H1 (cell line): ENCODE measurements at regions of chr7 and their contacts with region 1.

Region 1: GRCh38 chr7:131546583-131547111 is 9.8 kb downstream of the PODXL start:
- DNase-seq: peak; percentile 89 to 92
- H3K4me3 ChIP-seq: no peak overlapping the region
- H3K27ac ChIP-seq: no peak overlapping the region
- H3K4me1 ChIP-seq: peaks cover 39 to 86% (median 55%) of the 10 kb centered on the region in 4 experiments
- H3K27me3 ChIP-seq: no peaks in the 10 kb centered on the region
- CTCF ChIP-seq: peak; percentile 98 to 99 (median 98)
- EP300 ChIP-seq: no peak
- POLR2A ChIP-seq: no peak; a peak in 1 of 3 replicates
- RAD21 ChIP-seq: peak; percentile 73 to 79

Region 2: DNA sequence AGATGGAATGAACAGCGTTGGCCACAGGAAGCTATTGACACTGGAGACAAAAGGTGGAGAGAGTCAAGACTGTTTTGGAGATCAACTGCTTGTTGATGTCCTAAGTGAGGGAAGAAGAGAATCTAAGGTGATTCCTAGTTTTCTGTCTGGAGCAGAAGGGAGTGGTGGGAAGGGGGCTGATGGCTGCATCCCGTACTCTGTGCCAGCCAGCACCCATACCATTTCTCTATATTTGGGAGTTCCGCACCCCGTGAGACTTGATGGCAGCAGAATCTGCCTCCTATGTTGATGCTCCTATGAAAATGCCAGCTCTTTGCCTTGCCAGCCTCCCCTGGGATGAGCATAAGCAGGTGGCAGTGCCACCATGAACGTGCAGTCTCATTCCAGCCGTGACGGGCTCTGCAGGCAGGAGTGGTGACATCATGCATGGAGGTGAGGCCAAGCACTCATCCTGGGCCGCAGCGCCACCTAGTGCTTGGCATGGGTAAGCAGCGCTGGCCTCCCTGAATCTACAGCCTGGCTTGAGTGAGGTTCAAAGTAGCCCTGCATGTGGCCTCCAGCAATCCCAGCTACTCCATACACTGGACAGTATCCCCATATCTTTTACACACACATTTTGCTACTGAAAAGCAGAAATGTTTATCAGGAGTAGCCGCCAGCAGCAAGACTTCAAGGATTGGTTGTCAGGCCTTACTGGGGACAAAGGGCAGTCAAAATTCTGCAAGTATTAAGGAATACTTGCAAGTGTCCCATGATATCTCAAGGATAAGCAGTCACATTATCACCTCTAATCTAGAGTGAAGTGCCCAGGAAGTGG is 33.2 kb before region 1 on chr7:
- CTCF ChIA-PET with region 1: interaction called, 73 read pairs
- POLR2A ChIA-PET with region 1: interaction called, 5 read pairs
- DNase-seq: peak; percentile 74 to 94
- H3K4me3 ChIP-seq: no peak overlapping the region
- H3K27ac ChIP-seq: peak overlapping the region; percentile 25; the same call in 1 of the 2 replicates
- H3K4me1 ChIP-seq: peaks cover 0 to 8% (median 3%) of the 10 kb centered on the region in 4 experiments; a peak in 5 of 7 replicates
- H3K27me3 ChIP-seq: no peaks in the 10 kb centered on the region
- CTCF ChIP-seq: peak; percentile 83 to 100 (median 99)
- EP300 ChIP-seq: no peak
- POLR2A ChIP-seq: peak in 1 of 2 experiments; percentile 61; a peak in 1 of 3 replicates
- RAD21 ChIP-seq: peak; percentile 68 to 73

Region 3: DNA sequence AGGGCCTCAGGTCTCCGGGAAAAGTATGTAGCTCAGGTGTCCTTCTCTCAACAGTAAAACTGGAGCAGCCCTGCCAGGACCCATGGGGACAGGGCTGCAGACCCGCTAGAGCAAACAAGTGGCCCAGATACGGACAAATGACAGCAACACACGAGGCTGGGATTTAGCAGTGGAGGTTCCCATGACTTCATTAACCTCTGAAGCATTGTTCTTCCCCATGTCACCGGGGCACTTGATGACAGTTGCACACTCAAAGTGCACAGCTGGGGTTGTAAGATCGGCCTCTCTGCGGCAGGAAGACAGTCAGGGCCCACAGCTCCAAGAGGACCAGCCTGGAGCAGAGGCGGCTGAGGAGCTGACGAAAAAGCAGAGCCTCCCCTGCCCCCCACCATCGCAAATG is 22.3 kb after region 1 on chr7:
- CTCF ChIA-PET with region 1: interaction called, 34 read pairs
- POLR2A ChIA-PET with region 1: interaction called, 4 read pairs
- DNase-seq: no peak
- H3K4me3 ChIP-seq: no peak overlapping the region
- H3K27ac ChIP-seq: no peak overlapping the region
- H3K4me1 ChIP-seq: peaks cover 0 to 3% (median 2%) of the 10 kb centered on the region in 4 experiments; a peak in 2 of 7 replicates
- H3K27me3 ChIP-seq: no peaks in the 10 kb centered on the region
- CTCF ChIP-seq: no peak
- EP300 ChIP-seq: no peak
- POLR2A ChIP-seq: no peak
- RAD21 ChIP-seq: no peak

Region 4: DNA sequence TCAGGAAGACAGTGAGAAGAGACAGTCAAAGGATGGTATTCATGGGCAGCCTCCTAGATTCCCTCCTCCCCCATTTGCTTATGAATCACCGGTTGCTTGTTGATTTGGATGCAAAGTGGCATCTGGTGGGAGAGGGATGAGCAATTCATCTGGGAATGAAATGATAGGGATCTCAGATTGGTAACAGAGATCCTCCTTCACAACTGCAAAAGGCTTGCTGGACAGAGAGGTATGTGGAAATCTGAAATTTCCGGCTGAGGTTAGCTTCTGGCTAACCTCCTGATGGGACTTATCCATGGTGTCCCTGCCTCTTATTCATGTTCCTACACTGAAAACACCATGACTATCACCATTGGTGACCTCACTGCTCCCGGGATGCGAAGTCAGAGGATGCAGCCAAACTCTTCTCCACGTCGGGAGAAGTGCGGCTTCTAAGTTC is 58.2 kb after region 1 on chr7:
- CTCF ChIA-PET with region 1: interaction called, 103 read pairs
- POLR2A ChIA-PET with region 1: interaction called, 108 read pairs
- DNase-seq: peak in 1 of 2 experiments; percentile 88
- H3K4me3 ChIP-seq: peak overlapping the region; percentile 6 to 47 (median 11); a peak in 5 of 8 replicates
- H3K27ac ChIP-seq: peak overlapping the region; percentile 96
- H3K4me1 ChIP-seq: peaks cover 27 to 51% (median 45%) of the 10 kb centered on the region in 4 experiments
- H3K27me3 ChIP-seq: no peaks in the 10 kb centered on the region
- CTCF ChIP-seq: no peak
- EP300 ChIP-seq: no peak
- POLR2A ChIP-seq: peak in 1 of 2 experiments; percentile 13; a peak in 2 of 3 replicates
- RAD21 ChIP-seq: no peak

Region 5: DNA sequence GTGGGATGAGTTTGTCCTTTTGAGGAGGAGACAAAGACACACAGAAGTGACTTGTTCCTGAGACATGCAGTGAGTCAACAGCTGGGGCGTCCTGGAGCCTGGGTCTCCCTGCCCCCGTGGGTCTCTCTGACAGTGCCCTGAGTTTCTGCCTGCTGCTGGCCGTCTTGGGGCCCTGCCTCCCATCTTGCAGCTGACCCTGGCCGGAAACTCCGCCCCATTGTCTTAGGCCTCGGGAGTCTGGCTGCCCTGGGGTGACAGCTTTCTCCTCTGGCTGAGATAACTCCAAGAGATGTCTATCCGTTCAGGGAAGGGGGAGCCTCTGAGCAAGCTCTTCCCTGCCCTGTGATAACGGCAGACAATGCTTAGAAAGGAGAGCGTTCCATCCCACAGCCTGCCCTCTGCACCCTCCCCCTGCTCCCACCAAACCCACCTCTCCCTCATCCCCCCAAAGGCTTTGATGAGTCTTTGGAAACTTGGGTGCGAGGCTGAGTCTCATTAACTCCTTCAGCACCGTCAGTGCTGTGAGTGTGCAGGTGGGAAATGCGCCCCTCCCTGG is 79.2 kb after region 1 on chr7:
- CTCF ChIA-PET with region 1: interaction called, 93 read pairs
- POLR2A ChIA-PET with region 1: interaction called, 5 read pairs
- DNase-seq: peak; percentile 76 to 82
- H3K4me3 ChIP-seq: no peak overlapping the region; a peak in 1 of 8 replicates
- H3K27ac ChIP-seq: peak overlapping the region; percentile 53; the same call in 1 of the 2 replicates
- H3K4me1 ChIP-seq: peaks cover 7 to 22% (median 15%) of the 10 kb centered on the region in 4 experiments
- H3K27me3 ChIP-seq: no peaks in the 10 kb centered on the region
- CTCF ChIP-seq: peak in 2 of 3 experiments; percentile 12 to 34; a peak in 3 of 4 replicates
- EP300 ChIP-seq: no peak; a peak in 1 of 3 replicates
- POLR2A ChIP-seq: no peak
- RAD21 ChIP-seq: peak in 1 of 2 experiments; percentile 20; a peak in 2 of 4 replicates

Region 6: GRCh38 chr7:131649003-131649541 is 102.4 kb after region 1 on chr7:
- CTCF ChIA-PET with region 1: interaction called, 164 read pairs
- POLR2A ChIA-PET with region 1: interaction called, 7 read pairs
- DNase-seq: no peak
- H3K4me3 ChIP-seq: no peak overlapping the region
- H3K27ac ChIP-seq: no peak overlapping the region
- H3K4me1 ChIP-seq: peaks cover 0 to 28% (median 21%) of the 10 kb centered on the region in 4 experiments; a peak in 6 of 7 replicates
- H3K27me3 ChIP-seq: no peaks in the 10 kb centered on the region; a peak in 1 of 7 replicates
- CTCF ChIP-seq: no peak
- EP300 ChIP-seq: no peak
- POLR2A ChIP-seq: no peak
- RAD21 ChIP-seq: no peak; a peak in 1 of 4 replicates